Gastrocnemius medialis (tissue), 4 donors: ENCODE measurements at regions of chr16 and their contacts with region 1.

Region 1: DNA sequence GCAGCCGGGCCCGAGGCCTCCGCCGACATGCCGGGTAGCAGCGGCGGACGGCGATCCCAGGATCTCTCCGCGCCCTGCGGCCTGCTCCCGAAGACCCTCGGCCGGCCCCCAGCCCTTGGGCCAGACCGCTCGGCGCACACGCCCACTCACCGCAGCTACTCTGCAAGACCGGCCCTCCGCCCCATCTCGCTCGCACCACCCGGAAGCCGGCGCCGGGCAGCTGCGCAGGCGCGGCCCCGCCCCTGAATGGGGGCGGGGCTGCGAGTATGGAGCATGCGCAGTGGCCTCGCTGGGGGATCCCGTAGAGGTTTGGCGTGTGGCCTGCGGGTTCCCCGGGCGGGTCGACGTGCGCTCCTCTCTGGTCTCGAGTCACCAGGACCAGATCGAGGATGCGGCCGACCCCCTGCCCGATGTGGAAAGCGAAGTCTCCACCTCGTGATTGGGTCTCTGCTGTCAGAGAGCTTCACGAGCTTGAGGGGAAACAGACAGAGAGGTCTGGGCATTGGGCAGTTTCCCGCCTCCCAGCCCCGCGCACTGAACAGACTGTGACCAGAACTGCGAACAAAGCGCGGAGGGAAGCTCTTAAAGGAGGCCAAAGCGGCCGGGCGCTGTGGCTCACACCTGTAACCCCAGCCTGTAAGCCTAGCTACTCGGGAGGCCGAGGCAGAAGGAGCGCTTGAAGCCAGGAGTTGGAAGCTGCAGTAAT is at the start of gene KCTD13:
- DNase-seq: peak; percentile 63 to 73
- ATAC-seq: peak; percentile 94
- H3K4me3 ChIP-seq: peak within 1 kb of the TSS; percentile 75 to 99 (median 97)
- H3K27ac ChIP-seq: peak within 1 kb of the TSS; percentile 88 to 96 (median 89)
- H3K4me1 ChIP-seq: peaks cover 22 to 25% of the 10 kb centered on the region in 2 donors
- H3K27me3 ChIP-seq: no peaks in the 10 kb centered on the region
- CTCF ChIP-seq: no peak
- POLR2A ChIP-seq: peak; percentile 71 to 75
- total RNA-seq, gene KCTD13: 3.7 to 8.6 (median 6.3) TPM

Region 2: DNA sequence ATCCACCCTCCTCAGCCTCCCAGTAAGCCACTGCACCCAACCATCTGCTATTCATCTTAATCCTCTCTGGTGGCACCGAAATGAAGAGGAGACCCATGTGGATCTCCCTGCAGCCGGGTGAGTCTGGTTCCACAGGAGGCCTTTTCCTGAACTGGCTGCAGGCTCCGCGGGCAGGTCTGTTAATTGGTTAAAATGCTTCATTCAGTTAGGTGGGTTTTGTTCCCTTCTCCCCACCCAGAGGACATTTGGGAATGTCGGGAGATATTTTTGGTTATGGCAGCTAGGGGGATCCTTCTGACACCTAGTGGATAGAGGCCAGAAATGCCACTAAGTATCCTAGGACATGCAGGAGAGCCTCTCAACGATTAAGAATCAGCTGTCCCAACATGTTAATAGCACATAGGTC is 197.0 kb before region 1 on chr16:
- in situ Hi-C with region 1: no loop called
- intact Hi-C with region 1: no loop called
- DNase-seq: no peak
- ATAC-seq: peak in 1 of 2 donors; percentile 53
- H3K4me3 ChIP-seq: peak overlapping the region in 1 of 4 donors; percentile 24
- H3K27ac ChIP-seq: no peak overlapping the region
- H3K4me1 ChIP-seq: peaks cover 0 to 5% of the 10 kb centered on the region in 2 donors
- H3K27me3 ChIP-seq: no peaks in the 10 kb centered on the region
- CTCF ChIP-seq: peak in 3 of 5 experiments; percentile 31 to 50 (median 38)
- POLR2A ChIP-seq: no peak

Region 3: DNA sequence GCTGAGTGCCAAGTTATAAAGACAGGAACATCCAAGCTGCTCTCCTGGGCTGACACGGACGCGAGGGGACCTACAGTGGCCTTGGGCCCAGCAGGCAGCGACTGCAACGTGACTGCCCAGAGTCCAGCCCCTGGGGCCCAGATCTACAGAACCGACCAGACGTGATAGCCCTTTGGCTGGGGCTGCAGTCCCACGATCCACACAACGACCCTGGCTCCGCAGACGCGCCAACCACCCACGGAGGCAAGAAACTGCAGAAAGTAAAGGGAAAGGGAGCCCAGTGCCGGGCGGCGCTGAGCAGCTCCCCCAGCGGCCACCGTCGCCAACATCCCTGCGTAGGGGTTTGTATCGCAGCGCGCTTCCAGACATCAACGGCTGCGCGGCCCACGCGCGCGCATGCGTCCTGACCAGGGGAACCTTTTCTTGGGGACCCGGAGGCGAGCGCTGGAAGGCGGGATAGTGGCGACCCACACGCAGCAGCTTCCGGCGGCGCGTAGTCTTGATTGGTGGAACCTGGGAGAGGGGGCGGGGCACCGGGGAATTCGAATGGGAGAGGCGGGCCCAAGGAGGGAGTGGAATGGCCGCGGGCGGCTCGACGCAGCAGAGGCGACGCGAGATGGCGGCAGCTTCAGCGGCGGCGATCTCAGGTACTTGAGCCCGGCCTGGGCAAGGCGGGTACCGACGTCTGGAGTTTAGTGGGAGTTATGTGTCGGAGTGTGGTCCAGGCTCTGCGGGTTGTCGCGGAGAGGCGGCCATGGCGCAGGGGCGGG is 135.8 kb before region 1 on chr16 and contains the start of gene KIF22:
- in situ Hi-C with region 1: no loop called
- intact Hi-C with region 1: loop called (anchors 5 kb)
- DNase-seq: peak; percentile 99
- ATAC-seq: peak; percentile 96 to 98
- H3K4me3 ChIP-seq: peak within 1 kb of the TSS; percentile 91 to 95 (median 92)
- H3K27ac ChIP-seq: peak within 1 kb of the TSS; percentile 89 to 95 (median 93)
- H3K4me1 ChIP-seq: peaks cover 18 to 24% of the 10 kb centered on the region in 2 donors
- H3K27me3 ChIP-seq: no peaks in the 10 kb centered on the region
- CTCF ChIP-seq: peak; percentile 68 to 89 (median 79)
- POLR2A ChIP-seq: peak; percentile 51 to 60
- total RNA-seq, gene KIF22: 9.0 to 13.9 (median 12.8) TPM

Region 4: DNA sequence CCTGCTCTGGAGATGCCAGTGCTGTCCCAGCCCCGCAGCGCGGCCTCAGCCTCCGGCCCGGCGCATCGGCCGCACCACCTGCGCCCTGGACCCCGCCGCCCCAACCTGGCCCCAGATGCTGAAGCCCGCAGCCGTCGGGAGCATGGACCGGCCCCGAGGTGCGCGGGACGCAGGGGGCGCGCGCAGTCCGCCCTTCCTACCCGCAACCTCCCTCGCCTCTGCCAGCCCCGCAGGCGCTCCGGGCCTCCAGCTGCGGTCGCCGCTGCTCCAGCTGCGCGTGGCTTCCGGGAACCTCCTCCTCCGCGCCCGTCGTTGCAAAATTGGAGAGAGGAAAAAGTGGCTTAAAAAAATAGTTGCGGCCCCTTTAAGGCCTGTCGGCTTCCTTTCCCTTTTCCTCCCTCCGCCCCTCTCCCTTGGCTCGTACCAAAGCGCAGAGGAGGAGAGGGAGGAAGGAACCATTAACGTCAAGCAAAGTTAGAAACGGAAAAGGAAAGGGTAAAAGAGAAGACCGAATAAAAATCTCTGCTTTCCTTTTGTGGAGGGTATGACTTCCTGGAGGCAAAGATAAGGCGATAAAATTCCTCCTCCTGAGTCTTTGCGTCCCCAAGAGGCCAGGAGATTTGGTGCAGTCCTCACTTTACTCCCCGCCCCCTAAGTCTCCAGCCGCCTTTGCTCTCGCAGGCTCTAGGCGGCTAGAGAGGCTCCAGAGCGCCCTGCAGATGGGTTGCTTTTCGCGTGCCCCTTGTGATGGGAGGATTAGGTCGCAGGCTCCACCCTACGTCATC is 63.1 kb before region 1 on chr16 and contains the start of gene CDIPT:
- in situ Hi-C with region 1: no loop called
- intact Hi-C with region 1: loop called (anchors 1 kb)
- DNase-seq: peak; percentile 92 to 94
- ATAC-seq: peak; percentile 99
- H3K4me3 ChIP-seq: peak within 1 kb of the TSS; percentile 78 to 98 (median 80)
- H3K27ac ChIP-seq: peak within 1 kb of the TSS; percentile 87 to 96 (median 93)
- H3K4me1 ChIP-seq: peaks cover 18 to 20% of the 10 kb centered on the region in 2 donors
- H3K27me3 ChIP-seq: no peaks in the 10 kb centered on the region
- CTCF ChIP-seq: peak; percentile 32 to 64 (median 57)
- POLR2A ChIP-seq: peak; percentile 36 to 41
- total RNA-seq, gene CDIPT: 35.5 to 71.8 (median 55.7) TPM

Region 5: DNA sequence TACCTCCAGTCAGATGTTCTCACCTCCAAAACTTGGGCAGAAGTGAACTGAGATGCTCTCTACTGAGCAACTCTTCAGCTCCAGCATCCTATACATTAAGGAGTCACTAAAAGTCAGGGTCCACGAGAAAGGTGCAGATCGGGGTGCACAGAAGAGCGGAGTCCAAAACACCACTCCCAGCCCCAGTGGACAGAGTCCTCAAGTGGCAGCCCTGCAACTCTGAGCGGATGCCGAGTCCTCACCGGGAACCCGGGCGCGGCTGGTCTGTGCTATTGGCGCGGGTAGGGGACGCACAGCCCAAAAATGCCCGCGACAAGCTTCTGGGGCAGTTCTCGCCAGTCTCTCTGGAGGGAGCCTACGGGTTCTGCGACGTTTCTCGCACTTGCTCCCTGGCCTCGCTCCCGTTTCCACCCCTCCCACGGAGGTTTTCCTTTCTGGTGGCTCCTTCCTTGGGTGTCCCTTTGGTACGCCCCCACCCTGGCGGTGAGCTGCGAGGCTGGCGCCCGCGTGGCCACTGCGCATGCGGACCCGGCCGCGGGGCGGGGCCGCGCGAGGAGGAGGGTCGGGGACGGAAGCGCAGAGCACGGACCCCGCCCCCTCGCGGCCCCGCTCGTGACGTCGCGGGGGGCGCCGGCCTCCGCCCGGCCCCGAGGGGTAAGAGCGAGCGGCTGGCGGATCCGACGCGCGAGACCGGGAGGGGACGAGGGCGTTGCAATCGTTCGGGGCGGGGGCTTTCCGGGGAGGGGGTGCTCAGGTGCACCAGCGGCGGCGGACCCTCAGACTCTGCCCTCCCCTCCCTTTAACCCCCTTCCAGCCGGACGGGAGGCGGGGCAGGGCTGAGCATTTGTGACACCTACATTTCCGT is 35.6 kb after region 1 on chr16 and contains the start of gene TMEM219:
- in situ Hi-C with region 1: no loop called
- intact Hi-C with region 1: loop called (anchors 2 kb)
- DNase-seq: peak; percentile 62 to 81
- ATAC-seq: peak; percentile 95 to 96
- H3K4me3 ChIP-seq: peak within 1 kb of the TSS; percentile 67 to 95 (median 80)
- H3K27ac ChIP-seq: peak within 1 kb of the TSS; percentile 74 to 94 (median 88)
- H3K4me1 ChIP-seq: peaks cover 6 to 12% of the 10 kb centered on the region in 2 donors
- H3K27me3 ChIP-seq: no peaks in the 10 kb centered on the region
- CTCF ChIP-seq: peak; percentile 57 to 70 (median 67)
- POLR2A ChIP-seq: peak; percentile 53 to 55
- total RNA-seq, gene TMEM219: 48.1 to 120 (median 60.2) TPM

Region 6: DNA sequence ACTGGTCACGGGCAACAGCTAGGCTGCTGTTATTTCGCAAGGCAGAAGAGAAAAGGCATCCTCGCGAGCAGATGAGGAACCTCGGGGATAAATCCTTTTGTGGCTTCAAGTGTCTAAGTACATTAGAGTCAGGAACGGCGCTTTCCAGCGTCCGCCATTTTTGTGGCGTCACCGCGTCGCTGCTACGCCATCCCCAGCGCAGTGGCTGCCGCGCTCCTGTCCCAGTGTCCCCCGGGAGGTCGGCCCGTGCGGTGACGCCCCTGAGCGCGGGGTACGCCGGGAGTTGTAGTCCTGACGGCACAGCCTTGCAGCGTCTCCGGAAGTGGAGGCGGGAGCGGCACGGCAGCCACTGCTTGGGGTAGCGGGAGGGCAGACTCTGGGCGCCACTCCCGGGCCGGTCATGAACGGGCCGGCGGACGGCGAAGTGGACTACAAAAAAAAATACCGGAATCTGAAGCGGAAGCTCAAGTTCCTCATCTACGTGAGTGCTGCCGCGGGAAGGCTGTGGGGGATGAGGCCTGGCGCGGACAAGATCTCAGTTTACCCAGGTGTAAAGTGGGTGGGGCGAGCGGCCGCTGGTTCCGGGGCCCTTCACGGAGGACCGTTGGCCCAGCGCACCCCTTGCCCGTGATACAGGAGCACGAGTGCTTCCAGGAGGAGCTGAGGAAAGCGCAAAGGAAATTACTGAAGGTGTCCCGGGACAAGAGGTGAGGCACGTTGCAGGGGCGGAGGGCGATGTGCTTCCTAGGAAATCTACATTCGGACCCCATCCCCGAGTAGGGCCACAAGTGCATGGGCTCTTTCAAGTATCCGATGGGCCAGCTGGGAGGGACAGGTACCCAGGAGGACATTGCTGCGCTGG is 70.0 kb after region 1 on chr16 and contains the start of gene INO80E:
- in situ Hi-C with region 1: no loop called
- intact Hi-C with region 1: loop called (anchors 2 kb)
- DNase-seq: peak; percentile 98
- ATAC-seq: peak; percentile 91 to 97
- H3K4me3 ChIP-seq: peak within 1 kb of the TSS; percentile 79 to 100 (median 90)
- H3K27ac ChIP-seq: peak within 1 kb of the TSS; percentile 95 to 100 (median 99)
- H3K4me1 ChIP-seq: peaks cover 17 to 21% of the 10 kb centered on the region in 2 donors
- H3K27me3 ChIP-seq: no peaks in the 10 kb centered on the region
- CTCF ChIP-seq: peak in 1 of 5 experiments; percentile 10
- POLR2A ChIP-seq: peak; percentile 64 to 71
- total RNA-seq, gene INO80E: 45.4 to 74.8 (median 55.5) TPM